Endothelial cell of umbilical vein (primary cell): ENCODE measurements at regions of chr5 and their contacts with region 1.

Region 1: DNA sequence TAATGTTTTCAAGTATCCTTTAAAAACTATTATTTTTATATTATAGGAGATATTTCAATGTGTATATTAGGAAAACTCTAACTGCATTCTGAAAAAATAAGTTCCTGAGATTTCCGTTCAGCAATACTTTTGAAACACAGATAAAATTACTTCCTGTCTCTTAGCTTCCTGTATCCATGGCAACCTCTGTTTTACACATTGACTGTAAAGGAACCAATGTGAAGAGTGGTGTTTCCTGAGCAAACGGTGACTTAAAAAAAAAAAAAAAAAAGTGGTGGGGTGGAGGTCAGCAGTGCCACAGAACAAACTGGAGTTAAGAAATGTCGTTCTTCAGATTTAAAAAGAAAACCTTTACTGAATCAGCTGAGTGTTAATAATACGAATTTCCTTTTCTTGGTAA is at the start of gene LRRC70:
- DNase-seq: peak; percentile 93
- H3K4me3 ChIP-seq: peak within 1 kb of the TSS; percentile 51 to 99 (median 95)
- H3K27ac ChIP-seq: peak within 1 kb of the TSS; percentile 88
- H3K4me1 ChIP-seq: peaks cover 73% of the 10 kb centered on the region
- H3K27me3 ChIP-seq: no peaks in the 10 kb centered on the region
- CTCF ChIP-seq: no peak
- POLR2A ChIP-seq: no peak
- total RNA-seq, gene LRRC70: 24.5 and 26.5 TPM in 2 replicates

Region 2: DNA sequence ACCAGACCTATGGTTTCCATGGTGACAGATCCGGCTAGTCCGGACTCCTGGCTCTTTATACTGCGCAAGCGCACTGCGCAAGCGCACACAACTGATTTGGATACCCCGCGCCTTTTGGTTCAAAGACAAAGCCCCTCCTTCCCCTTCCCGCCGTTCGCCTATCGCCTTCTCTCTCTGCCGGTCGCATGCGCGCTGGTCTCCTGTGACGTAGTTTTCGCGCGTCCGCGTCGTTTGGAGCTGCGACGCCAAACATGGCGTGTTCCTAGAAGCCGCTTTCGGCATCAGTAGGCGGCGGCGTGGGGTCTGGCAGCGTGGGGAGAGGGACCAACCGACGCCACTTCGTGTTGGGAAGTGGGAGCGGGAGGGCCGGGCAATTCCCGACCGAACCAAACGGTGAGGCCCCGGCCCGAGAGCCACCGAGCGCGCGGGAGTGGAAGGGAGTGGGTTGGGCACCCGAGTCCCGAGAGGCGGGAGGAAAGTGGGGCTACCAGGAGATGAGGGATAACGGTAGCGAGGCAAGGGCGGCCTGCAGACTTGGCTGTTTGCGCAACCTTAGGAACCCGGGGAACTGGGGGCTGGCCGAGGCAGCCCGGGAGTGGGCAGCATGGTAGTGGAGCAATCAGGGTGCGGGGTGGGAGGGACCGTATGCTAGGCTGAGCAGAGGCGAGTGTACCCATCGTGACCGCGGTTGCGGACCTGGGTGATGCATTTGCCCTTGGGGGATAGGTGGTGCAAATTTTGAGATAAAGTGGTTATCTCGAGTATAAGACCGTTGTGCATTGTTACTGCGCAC is 165.8 kb before region 1 on chr5 and contains the start of gene IPO11:
- CTCF ChIA-PET with region 1: no interaction called
- POLR2A ChIA-PET with region 1: no interaction called
- dilution Hi-C with region 1: no loop called
- intact Hi-C with region 1: loop called (anchors 2 kb)
- DNase-seq: peak; percentile 99
- H3K4me3 ChIP-seq: peak within 1 kb of the TSS; percentile 53 to 96 (median 73)
- H3K27ac ChIP-seq: peak within 1 kb of the TSS; percentile 56
- H3K4me1 ChIP-seq: peaks cover 13% of the 10 kb centered on the region
- H3K27me3 ChIP-seq: no peaks in the 10 kb centered on the region
- CTCF ChIP-seq: no peak
- POLR2A ChIP-seq: peak; percentile 74
- total RNA-seq, gene IPO11: 72.9 and 80.9 TPM in 2 replicates

Region 3: GRCh38 chr5:62494772-62495171 is 83.8 kb before region 1 on chr5:
- CTCF ChIA-PET with region 1: no interaction called
- POLR2A ChIA-PET with region 1: no interaction called
- dilution Hi-C with region 1: no loop called
- intact Hi-C with region 1: loop called (anchors 5 kb)
- DNase-seq: no peak
- H3K4me3 ChIP-seq: no peak overlapping the region
- H3K27ac ChIP-seq: no peak overlapping the region
- H3K4me1 ChIP-seq: no peaks in the 10 kb centered on the region
- H3K27me3 ChIP-seq: no peaks in the 10 kb centered on the region
- CTCF ChIP-seq: no peak
- POLR2A ChIP-seq: no peak

Region 4: GRCh38 chr5:62538017-62538942 is 40.3 kb before region 1 on chr5:
- CTCF ChIA-PET with region 1: interaction called, 3 read pairs
- POLR2A ChIA-PET with region 1: no interaction called
- dilution Hi-C with region 1: no loop called
- intact Hi-C with region 1: loop called (anchors 2 kb)
- DNase-seq: peak; percentile 58
- H3K4me3 ChIP-seq: no peak overlapping the region
- H3K27ac ChIP-seq: no peak overlapping the region
- H3K4me1 ChIP-seq: no peaks in the 10 kb centered on the region
- H3K27me3 ChIP-seq: no peaks in the 10 kb centered on the region
- CTCF ChIP-seq: no peak
- POLR2A ChIP-seq: no peak